ENCODE measurements at regions of chr18 and their contacts with region 1.

Region 1: GRCh38 chr18:34787931-34788532 is 77.9 kb downstream of the DTNA start:
- DNase-seq: peak; percentile 80
- H3K4me3 ChIP-seq: no peak overlapping the region
- H3K27ac ChIP-seq: no peak overlapping the region
- H3K4me1 ChIP-seq: peaks cover 7% of the 10 kb centered on the region
- H3K27me3 ChIP-seq: no peaks in the 10 kb centered on the region
- CTCF ChIP-seq: peak; percentile 77

Region 2: GRCh38 chr18:34128436-34128835 is 659.6 kb before region 1 on chr18:
- CTCF ChIA-PET with region 1: no interaction called
- POLR2A ChIA-PET with region 1: no interaction called
- intact Hi-C with region 1: loop called (anchors 5 kb)
- DNase-seq: peak; percentile 54
- H3K4me3 ChIP-seq: no peak overlapping the region
- H3K27ac ChIP-seq: peak overlapping the region; percentile 0
- H3K4me1 ChIP-seq: peaks cover 57% of the 10 kb centered on the region
- H3K27me3 ChIP-seq: no peaks in the 10 kb centered on the region
- CTCF ChIP-seq: no peak

Region 3: DNA sequence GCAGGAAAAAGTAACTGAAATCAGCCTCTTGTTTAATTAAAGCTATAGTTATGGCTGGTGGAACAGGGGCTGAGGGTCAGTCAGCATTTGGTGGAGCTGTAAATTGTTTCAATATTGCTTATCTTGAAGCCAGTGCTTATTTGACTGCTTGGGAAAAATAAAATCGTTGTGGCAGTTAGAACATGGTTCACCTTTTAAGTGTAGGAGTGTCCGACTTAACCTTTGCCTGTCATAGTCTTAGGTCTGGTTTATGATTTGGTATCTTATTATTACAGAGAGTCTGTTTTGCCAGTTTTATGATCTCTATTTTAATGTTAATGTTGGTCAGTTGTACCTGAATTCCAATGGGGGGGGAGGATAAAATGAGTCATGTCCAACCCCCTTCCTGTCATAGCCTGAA is 536.1 kb before region 1 on chr18:
- CTCF ChIA-PET with region 1: no interaction called
- POLR2A ChIA-PET with region 1: no interaction called
- intact Hi-C with region 1: no loop called
- DNase-seq: no peak
- H3K4me3 ChIP-seq: no peak overlapping the region
- H3K27ac ChIP-seq: no peak overlapping the region
- H3K4me1 ChIP-seq: no peaks in the 10 kb centered on the region
- H3K27me3 ChIP-seq: no peaks in the 10 kb centered on the region
- CTCF ChIP-seq: no peak

Region 4: DNA sequence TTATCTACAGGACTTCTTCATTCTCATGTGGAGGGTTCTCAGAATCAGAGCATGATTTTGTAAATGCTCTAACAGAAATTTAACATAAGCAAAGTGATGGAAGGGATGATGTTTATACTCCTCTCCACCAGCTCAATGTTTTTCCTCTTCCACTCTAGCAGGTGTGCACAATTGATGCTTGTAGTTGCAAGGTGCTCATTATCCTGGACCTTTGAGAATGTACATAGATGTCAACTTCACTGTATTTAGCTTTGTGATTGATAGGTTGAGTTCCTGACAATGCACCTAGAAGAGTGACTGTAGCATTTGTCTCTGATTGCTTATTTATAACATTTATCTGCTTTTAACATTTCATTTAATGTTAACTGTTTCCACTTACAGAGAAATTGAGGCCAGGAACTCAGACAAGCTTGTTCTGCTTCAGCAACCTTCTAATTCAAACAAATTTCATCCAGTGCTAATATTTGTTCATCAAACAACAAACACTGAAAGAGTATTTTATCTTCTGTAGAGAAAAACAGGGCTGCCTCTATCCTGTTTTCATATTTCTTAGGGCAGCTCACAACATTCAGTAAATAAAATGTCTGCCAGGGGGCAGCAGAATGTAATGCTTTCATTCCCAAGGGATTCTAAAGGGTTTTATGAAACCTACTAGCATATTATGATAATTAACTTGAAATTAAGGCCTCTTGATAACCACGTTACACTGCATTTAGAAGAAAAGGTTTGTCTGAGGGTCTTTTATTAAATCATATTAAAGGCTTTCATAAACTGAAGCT is 435.5 kb before region 1 on chr18:
- CTCF ChIA-PET with region 1: interaction called, 3 read pairs
- POLR2A ChIA-PET with region 1: no interaction called
- intact Hi-C with region 1: loop called (anchors 10 kb)
- DNase-seq: peak; percentile 39
- H3K4me3 ChIP-seq: no peak overlapping the region
- H3K27ac ChIP-seq: no peak overlapping the region
- H3K4me1 ChIP-seq: no peaks in the 10 kb centered on the region
- H3K27me3 ChIP-seq: no peaks in the 10 kb centered on the region
- CTCF ChIP-seq: peak; percentile 49

Region 5: DNA sequence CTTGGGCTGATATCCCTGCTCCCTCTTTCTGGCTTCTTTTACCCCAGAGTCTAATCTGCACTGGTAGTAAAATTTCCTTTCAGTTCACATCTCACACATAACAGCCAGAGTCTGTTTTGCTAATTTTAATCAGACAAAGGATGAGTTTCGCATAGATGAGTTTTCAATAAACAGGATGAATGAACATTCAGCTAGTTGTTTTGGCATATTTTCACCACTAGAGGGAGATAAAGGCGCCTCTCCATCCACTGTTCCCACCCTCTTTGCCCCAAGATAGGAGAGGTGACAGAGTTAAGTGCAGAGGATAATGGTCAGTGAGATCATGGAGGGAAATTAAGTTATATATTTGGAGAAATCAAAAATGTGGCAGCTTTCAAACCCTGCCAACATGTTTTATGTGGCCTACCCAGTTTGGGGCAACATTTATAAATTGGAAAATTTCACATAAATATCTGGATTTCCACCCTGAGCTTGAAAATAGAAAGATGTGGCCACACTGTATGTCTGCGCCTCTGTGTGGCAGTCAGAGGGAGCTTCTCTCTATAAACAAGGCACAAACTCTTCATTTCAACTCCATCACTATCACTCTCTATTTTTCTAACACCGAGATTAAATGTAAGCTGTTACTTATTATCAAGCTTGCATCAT is 126.4 kb before region 1 on chr18:
- CTCF ChIA-PET with region 1: interaction called, 28 read pairs
- POLR2A ChIA-PET with region 1: no interaction called
- intact Hi-C with region 1: loop called (anchors 1 kb)
- DNase-seq: peak; percentile 72
- H3K4me3 ChIP-seq: no peak overlapping the region
- H3K27ac ChIP-seq: no peak overlapping the region
- H3K4me1 ChIP-seq: peaks cover 11% of the 10 kb centered on the region
- H3K27me3 ChIP-seq: no peaks in the 10 kb centered on the region
- CTCF ChIP-seq: peak; percentile 89

Region 6: DNA sequence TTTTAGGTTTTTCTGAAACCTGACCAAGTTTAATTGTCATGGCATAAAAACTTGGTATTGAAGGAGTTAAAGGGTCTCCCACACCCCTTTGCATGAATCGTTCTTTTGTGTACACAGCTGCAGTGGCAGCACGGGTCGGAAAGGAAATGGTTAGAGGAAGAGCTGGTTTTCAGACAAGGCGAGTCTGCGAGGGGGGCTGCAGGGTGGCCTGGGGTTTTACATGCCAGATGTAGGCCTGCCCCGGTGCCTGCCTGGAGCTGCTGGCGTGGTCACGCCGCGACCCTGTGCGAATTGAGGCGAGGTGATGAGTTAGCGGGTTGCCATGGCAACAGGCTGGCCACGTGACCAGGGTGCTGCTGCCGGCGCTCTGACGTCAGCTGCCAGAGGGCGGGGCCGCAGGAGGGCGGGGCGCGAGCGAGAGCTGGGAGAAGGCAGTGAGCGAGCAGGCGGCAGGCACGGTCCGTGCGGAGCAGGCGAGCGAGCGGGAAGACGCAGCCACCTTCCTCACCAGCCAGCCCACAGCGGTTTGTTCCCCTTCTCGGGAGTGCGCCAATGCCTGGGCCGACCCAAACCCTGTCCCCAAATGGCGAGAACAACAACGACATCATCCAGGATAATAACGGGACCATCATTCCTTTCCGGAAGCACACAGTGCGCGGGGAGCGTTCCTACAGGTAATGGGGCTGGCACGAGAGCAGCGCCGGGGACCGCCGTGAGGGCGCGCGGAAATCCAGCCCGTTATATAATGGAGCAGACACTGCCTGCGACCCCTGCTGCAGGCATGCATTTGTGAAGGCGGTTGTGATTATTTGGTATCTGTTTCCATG is 253.2 kb after region 1 on chr18 and contains the start of gene MAPRE2:
- CTCF ChIA-PET with region 1: no interaction called
- POLR2A ChIA-PET with region 1: no interaction called
- intact Hi-C with region 1: no loop called
- DNase-seq: peak; percentile 97
- H3K4me3 ChIP-seq: peak within 1 kb of the TSS; percentile 72
- H3K27ac ChIP-seq: peak within 1 kb of the TSS; percentile 64
- H3K4me1 ChIP-seq: peaks cover 15% of the 10 kb centered on the region
- H3K27me3 ChIP-seq: no peaks in the 10 kb centered on the region
- CTCF ChIP-seq: no peak
- total RNA-seq, gene MAPRE2: 14.7 and 16.4 TPM in 2 replicates

Measured in A673 (cell line).